Natural killer cell (primary cell): ENCODE measurements at regions of chr7 and their contacts with region 1.

Region 1: GRCh38 chr7:54299426-54299825 is 242.7 kb upstream of the VSTM2A start:
- DNase-seq: no peak
- ATAC-seq: no peak
- H3K4me3 ChIP-seq: no peak overlapping the region
- H3K4me3 Mint-ChIP-seq: no peak overlapping the region
- H3K27ac ChIP-seq: no peak overlapping the region
- H3K27ac Mint-ChIP-seq: no peak overlapping the region
- H3K4me1 ChIP-seq: no peaks in the 10 kb centered on the region
- H3K4me1 Mint-ChIP-seq: no peaks in the 10 kb centered on the region
- H3K27me3 ChIP-seq: no peaks in the 10 kb centered on the region
- H3K27me3 Mint-ChIP-seq: no peaks in the 10 kb centered on the region
- CTCF ChIP-seq: no peak

Region 2: GRCh38 chr7:54037873-54038272 is 261.6 kb before region 1 on chr7:
- intact Hi-C with region 1: no loop called
- DNase-seq: no peak
- ATAC-seq: no peak
- H3K4me3 ChIP-seq: no peak overlapping the region
- H3K4me3 Mint-ChIP-seq: no peak overlapping the region
- H3K27ac ChIP-seq: no peak overlapping the region
- H3K27ac Mint-ChIP-seq: no peak overlapping the region
- H3K4me1 ChIP-seq: no peaks in the 10 kb centered on the region
- H3K4me1 Mint-ChIP-seq: no peaks in the 10 kb centered on the region
- H3K27me3 ChIP-seq: no peaks in the 10 kb centered on the region
- H3K27me3 Mint-ChIP-seq: no peaks in the 10 kb centered on the region
- CTCF ChIP-seq: no peak

Region 3: DNA sequence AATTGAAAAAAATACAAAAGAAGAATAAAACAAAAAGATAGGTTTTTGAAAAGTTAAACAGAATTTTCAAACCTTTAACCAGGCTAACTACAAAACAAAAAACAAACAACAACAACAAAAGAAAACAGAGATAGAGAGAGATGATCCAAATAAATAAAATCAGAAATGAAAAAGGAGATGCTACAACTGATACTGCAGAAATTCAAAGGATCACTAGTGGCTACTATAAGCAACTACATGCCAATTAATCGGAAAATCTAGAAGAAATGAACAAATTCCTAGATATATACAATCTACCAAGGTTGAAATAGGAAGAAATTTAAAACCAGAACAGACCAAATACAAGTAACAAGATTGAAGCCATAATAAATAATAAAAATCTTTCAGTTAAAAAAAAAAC is 84.0 kb before region 1 on chr7:
- intact Hi-C with region 1: loop called (anchors 10 kb)
- DNase-seq: no peak
- ATAC-seq: no peak
- H3K4me3 ChIP-seq: no peak overlapping the region
- H3K4me3 Mint-ChIP-seq: no peak overlapping the region
- H3K27ac ChIP-seq: no peak overlapping the region
- H3K27ac Mint-ChIP-seq: no peak overlapping the region
- H3K4me1 ChIP-seq: no peaks in the 10 kb centered on the region
- H3K4me1 Mint-ChIP-seq: no peaks in the 10 kb centered on the region
- H3K27me3 ChIP-seq: no peaks in the 10 kb centered on the region
- H3K27me3 Mint-ChIP-seq: no peaks in the 10 kb centered on the region
- CTCF ChIP-seq: no peak